Mammary epithelial cell (primary cell): ENCODE measurements at regions of chr12 and their contacts with region 1.

Region 1: DNA sequence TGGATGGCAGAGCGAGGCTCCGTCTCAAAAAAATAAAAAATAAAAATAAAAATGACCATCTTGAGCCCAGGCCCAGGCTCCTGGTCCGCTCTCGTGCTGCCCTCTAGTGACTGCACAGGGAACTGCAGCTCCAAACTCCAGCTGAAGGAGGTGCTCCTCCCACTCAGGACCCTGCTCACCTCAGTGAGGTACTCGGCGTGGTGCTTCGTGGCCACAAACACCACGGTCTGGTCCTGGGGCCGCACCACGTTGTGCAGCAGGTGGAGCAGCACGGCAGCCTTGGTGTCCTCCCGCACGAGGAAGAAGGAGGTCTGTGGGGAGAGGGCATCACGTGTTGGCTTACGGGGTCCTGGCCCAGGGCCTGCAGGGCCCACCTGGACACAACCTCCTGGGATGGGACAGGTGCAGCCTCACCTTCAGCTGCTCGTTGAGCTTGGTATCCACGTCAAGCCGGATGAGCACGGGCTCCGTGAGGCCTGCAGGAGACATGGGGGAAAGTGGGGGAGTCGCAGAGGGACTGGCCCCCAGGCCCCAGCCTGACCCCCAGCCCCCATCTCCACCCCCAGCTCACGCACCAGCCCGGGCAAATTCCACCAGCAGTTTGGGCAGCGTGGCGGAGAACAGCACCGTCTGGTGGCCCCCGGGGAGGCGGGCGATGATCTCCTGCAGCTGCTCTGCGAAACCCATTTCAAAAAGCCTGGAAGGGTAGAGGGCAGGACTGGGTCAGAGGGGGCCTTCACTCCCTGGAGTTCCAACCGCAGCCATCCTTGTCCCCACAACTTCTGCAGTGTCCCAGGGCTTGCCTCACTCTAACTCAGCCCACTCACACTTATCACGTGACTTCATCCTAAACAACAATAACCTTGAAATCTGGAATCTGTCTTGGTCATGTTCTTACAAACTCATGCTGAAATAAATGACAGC is 10.6 kb downstream of the DDX54 start:
- DNase-seq: peak; percentile 27
- H3K4me3 ChIP-seq: no peak overlapping the region
- H3K27ac ChIP-seq: no peak overlapping the region
- H3K4me1 ChIP-seq: no peaks in the 10 kb centered on the region
- H3K27me3 ChIP-seq: no peaks in the 10 kb centered on the region
- CTCF ChIP-seq: peak; percentile 97 to 98

Region 2: GRCh38 chr12:113048716-113049127 is 126.0 kb before region 1 on chr12:
- CTCF ChIA-PET with region 1: interaction called, 4 read pairs
- dilution Hi-C with region 1: no loop called
- in situ Hi-C with region 1: loop called in 1 of 2 experiments (anchors 5 kb)
- intact Hi-C with region 1: loop called (anchors 1 kb)
- DNase-seq: peak; percentile 32
- H3K4me3 ChIP-seq: no peak overlapping the region
- H3K27ac ChIP-seq: no peak overlapping the region
- H3K4me1 ChIP-seq: no peaks in the 10 kb centered on the region
- H3K27me3 ChIP-seq: no peaks in the 10 kb centered on the region
- CTCF ChIP-seq: peak; percentile 71 to 84